ENCODE measurements at regions of chr10 and their contacts with region 1.

Region 1: DNA sequence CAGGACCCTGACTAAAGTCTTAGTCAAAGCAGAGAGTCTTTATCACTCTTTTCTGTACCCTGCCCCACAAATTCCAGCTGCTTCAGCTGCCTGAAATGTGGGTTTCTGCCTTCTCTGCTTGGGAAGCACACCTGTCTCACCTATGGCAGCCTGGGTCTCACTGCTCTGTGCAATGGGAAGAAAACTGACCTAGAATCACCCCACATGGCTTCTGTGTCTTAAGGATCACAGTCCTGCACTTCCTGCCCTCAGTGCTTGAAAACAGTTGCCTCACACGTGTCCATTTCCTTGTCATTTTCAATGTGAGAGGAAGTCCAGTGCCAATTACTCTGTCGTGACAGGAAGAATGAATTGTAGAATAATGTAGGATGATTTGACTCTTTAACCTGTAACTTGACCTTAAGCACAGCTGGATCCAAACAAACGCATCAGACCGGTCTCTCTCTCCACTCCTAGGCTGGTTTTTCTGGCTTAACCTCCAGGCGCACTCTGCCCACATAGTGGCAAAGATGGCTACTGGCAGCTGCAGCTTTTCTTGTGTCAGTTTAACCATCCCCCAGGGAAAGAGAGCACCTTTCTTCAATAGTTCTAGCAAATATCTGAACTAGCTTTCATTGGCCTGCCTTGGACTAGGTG is 29.5 kb upstream of the PNLIPRP3 start:
- DNase-seq: no peak
- ATAC-seq: no peak
- H3K4me3 ChIP-seq: no peak overlapping the region
- H3K27ac ChIP-seq: no peak overlapping the region
- H3K4me1 ChIP-seq: no peaks in the 10 kb centered on the region
- H3K27me3 ChIP-seq: peaks cover 0 to 10% (median 0%) of the 10 kb centered on the region in 7 donors
- CTCF ChIP-seq: no peak

Region 2: DNA sequence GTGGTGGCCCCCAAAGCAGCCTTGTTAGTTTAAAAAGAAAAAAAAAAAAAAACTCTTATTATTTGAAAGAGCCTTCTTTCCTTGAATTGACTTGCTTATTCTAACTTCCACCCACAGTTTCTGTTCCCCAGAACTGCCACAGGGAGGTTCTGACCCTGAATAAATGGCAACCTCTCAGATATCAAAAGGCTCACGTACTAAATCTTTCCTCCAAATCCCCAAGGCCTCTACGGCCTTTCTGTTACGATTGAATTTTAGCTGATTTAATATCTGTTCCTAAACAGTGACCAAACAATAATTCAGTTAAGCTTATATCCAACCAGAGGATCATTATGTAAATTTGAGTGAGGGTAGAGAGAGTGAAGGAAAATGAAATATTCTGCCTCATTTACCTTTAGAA is 607.9 kb before region 1 on chr10:
- intact Hi-C with region 1: loop called in 1 of 10 experiments (anchors 10 kb)
- DNase-seq: no peak
- ATAC-seq: no peak
- H3K4me3 ChIP-seq: no peak overlapping the region
- H3K27ac ChIP-seq: no peak overlapping the region
- H3K4me1 ChIP-seq: no peaks in the 10 kb centered on the region
- H3K27me3 ChIP-seq: no peaks in the 10 kb centered on the region
- CTCF ChIP-seq: no peak

Region 3: GRCh38 chr10:115989621-115990020 is 408.5 kb before region 1 on chr10:
- intact Hi-C with region 1: no loop called
- DNase-seq: no peak
- ATAC-seq: no peak
- H3K4me3 ChIP-seq: no peak overlapping the region
- H3K27ac ChIP-seq: no peak overlapping the region
- H3K4me1 ChIP-seq: no peaks in the 10 kb centered on the region
- H3K27me3 ChIP-seq: no peaks in the 10 kb centered on the region
- CTCF ChIP-seq: no peak

Measured in heart right ventricle (tissue), 16 donors.